HEK293 (cell line): ENCODE measurements at regions of chr5 and their contacts with region 1.

Region 1: DNA sequence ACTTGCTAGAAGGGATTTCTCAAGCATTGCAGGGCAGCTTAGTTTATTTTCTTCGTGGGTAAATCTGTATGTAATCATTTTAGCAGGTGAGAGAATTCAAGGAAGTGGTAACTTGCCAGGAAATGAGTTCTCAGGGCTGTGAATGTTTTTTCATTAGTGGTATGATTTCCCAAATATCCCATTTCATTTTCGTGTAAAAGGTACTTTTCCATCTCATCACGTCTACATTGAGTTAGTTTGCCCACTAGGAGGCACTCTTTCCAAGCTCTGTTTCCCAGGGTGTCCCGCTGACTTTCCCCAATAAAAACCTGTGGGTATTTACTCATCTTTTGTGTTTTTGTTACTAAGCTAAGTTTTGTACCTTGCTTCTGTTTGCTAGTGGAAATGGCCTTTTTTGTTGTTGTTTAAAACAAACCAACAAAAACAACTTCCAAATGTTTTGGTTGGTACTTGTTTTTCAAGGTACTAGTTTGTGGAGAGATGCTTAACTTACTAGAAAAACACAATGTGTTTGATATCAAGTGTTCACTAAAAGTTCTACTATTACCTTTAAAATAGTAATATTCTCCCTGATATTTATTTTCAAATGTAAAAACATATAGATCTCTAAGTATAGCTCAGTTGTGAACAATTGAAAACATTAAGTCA is 373.6 kb downstream of the ADGRV1 start:
- H3K4me3 ChIP-seq: no peak overlapping the region
- H3K27ac ChIP-seq: no peak overlapping the region
- H3K4me1 ChIP-seq: peaks cover 5% of the 10 kb centered on the region; the same call in 1 of the 2 replicates
- CTCF ChIP-seq: peak; percentile 72; the same call in 1 of the 2 replicates

Region 2: GRCh38 chr5:90866333-90866732 is 65.8 kb before region 1 on chr5:
- CTCF ChIA-PET with region 1: interaction called, 11 read pairs
- POLR2A ChIA-PET with region 1: no interaction called
- H3K4me3 ChIP-seq: no peak overlapping the region
- H3K27ac ChIP-seq: no peak overlapping the region
- H3K4me1 ChIP-seq: no peaks in the 10 kb centered on the region
- CTCF ChIP-seq: no peak; the same call in 1 of the 2 replicates